ENCODE measurements at regions of chr2 and their contacts with region 1.

Region 1: DNA sequence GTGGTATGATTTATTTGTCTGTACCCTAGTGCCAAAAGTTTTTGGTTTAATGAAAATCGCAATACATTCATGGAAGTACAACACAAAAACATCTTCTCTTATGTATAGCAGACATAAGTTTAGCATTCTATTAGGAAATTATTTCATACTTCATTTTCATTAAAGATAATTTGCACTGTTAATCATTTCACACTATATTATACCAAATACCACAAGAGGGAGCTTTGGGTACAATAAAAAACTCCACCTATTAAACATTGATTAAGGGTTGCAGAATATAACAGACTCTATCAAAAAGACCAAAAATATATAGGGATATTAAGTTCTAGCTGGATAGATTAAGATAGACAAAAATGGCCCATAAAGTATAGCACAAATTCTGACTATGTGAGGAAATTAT is 79.0 kb downstream of the SLC66A3 start:
- DNase-seq: no peak
- ATAC-seq: peak; percentile 39 to 61 (median 56)
- H3K4me3 ChIP-seq: no peak overlapping the region
- H3K27ac ChIP-seq: no peak overlapping the region
- H3K4me1 ChIP-seq: peaks cover 38% of the 10 kb centered on the region
- H3K27me3 ChIP-seq: no peaks in the 10 kb centered on the region
- CTCF ChIP-seq: peak; percentile 63

Region 2: DNA sequence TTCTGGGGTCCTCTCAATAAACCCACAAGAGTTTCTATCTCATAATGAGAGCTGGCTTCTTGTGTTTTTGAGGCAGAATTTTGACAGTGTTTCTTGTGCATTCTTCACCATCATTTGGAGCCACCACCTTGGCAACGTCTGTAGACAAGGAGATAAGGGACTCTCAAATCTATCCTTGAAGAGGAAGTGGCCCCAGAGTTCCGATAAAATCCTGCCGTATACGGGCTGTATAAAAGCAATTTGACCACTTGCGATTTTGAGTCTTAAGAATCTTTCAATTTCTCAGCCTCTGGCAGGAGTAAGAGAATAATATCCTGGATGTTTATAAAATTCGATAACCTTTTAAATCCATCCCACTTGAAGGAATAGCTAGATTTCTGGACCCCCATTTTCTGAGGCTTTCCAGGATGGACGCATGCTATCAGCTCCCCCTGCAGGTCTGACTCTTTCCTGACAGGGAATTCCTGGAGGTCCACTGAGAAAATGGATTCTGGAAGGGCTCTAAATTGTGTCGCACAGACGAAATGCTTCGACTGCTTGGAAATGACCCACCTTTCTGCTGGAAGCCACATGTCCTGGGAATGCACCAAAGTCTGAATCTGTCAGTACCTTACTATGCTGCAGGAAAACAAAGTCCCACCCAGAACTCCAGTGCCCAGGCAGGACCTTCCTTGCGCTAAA is 177.6 kb after region 1 on chr2:
- intact Hi-C with region 1: loop called (anchors 1 to 2 kb)
- DNase-seq: no peak
- ATAC-seq: peak in 2 of 4 donors; percentile 65 to 76
- H3K4me3 ChIP-seq: peak overlapping the region; percentile 62
- H3K27ac ChIP-seq: no peak overlapping the region
- H3K4me1 ChIP-seq: peaks cover 39% of the 10 kb centered on the region
- H3K27me3 ChIP-seq: no peaks in the 10 kb centered on the region
- CTCF ChIP-seq: peak; percentile 83

Region 3: GRCh38 chr2:11446733-11447248 is 212.5 kb after region 1 on chr2:
- intact Hi-C with region 1: loop called in 1 of 2 experiments (anchors 10 kb)
- DNase-seq: peak in 1 of 2 donors; percentile 24
- ATAC-seq: peak; percentile 87 to 91 (median 88)
- H3K4me3 ChIP-seq: no peak overlapping the region
- H3K27ac ChIP-seq: peak overlapping the region; percentile 32
- H3K4me1 ChIP-seq: no peaks in the 10 kb centered on the region
- H3K27me3 ChIP-seq: no peaks in the 10 kb centered on the region
- CTCF ChIP-seq: peak; percentile 88